ENCODE measurements at regions of chr11 and their contacts with region 1.

Region 1: GRCh38 chr11:72040726-72041441 is 39.5 kb downstream of the NUMA1 start:
- DNase-seq: peak; percentile 78 to 90
- H3K4me3 ChIP-seq: peak overlapping the region; percentile 51
- H3K27ac ChIP-seq: peak overlapping the region; percentile 32
- H3K4me1 ChIP-seq: peaks cover 12% of the 10 kb centered on the region
- H3K27me3 ChIP-seq: no peaks in the 10 kb centered on the region
- CTCF ChIP-seq: no peak

Region 2: DNA sequence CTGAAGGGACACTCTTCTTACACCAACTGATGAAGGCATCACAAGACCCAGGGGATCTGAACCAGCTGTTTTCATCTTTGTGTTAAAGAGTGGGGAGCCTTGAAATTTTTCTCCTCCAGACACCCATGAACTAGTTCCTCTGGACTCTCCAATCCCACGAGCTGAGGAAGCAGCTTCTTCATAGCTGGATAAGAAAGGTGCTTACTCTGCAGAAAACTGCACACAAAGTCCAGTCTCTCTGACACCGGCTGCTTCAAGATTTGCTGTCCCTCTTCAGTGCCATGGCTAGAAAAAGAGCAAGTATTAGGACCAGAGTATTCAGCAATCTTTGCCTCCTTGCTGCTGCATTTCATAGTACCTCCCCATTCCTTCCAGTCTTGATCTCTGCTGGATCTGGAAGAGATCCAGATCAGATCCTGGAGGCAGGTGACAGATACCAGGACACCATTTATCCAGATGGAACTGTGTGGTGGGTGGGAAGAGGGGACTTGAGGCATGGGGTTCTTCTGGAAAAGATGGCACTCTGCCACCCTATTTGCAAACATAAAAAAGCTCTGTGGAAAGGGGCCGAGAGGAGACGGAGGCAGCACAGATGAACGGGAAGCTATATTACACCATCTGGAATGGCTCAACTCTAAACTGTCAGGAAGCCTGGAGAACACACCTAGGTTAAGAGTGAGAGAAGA is 16.7 kb before region 1 on chr11:
- CTCF ChIA-PET with region 1: interaction called, 15 read pairs
- POLR2A ChIA-PET with region 1: interaction called, 9 read pairs
- intact Hi-C with region 1: no loop called
- DNase-seq: no peak
- H3K4me3 ChIP-seq: no peak overlapping the region
- H3K27ac ChIP-seq: no peak overlapping the region
- H3K4me1 ChIP-seq: no peaks in the 10 kb centered on the region
- H3K27me3 ChIP-seq: no peaks in the 10 kb centered on the region
- CTCF ChIP-seq: no peak

Region 3: DNA sequence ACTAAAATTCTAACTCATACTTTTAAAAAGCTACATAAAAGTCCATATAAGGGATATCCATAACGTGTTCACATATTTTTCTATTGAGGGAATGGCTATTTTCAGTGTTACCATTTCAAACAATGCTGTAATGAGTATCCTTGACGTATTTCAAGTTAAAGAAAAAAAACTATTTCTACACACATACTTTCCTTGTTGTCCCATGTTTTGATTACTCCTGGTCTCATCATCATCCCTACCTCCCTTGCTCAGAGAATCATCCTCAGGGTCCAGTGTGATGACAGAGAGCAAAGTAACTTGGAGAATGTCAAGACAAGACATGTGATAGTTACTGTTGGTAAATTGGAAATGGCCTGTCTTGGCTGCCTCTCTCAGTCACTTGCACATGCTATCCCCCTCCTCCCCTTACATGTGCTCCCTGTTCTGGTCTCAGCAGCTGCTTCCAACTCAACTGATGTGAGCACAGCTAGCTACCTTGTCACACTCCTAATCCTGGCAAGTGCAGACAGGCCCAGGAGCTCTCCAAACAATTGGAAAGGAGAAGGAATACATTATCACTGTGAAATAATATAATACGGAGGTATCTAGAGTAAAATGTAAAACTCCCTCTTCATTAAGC is 17.6 kb after region 1 on chr11:
- CTCF ChIA-PET with region 1: no interaction called
- POLR2A ChIA-PET with region 1: no interaction called
- intact Hi-C with region 1: no loop called
- DNase-seq: no peak
- H3K4me3 ChIP-seq: no peak overlapping the region
- H3K27ac ChIP-seq: no peak overlapping the region
- H3K4me1 ChIP-seq: no peaks in the 10 kb centered on the region
- H3K27me3 ChIP-seq: no peaks in the 10 kb centered on the region
- CTCF ChIP-seq: no peak

Region 4: GRCh38 chr11:72069787-72070251 is 28.9 kb after region 1 on chr11:
- CTCF ChIA-PET with region 1: no interaction called
- POLR2A ChIA-PET with region 1: interaction called, 6 read pairs
- intact Hi-C with region 1: loop called (anchors 1 kb)
- DNase-seq: peak; percentile 84 to 87
- H3K4me3 ChIP-seq: peak overlapping the region; percentile 35; the same call in 1 of the 2 replicates
- H3K27ac ChIP-seq: peak overlapping the region; percentile 83
- H3K4me1 ChIP-seq: peaks cover 57% of the 10 kb centered on the region
- H3K27me3 ChIP-seq: no peaks in the 10 kb centered on the region
- CTCF ChIP-seq: no peak

Region 5: DNA sequence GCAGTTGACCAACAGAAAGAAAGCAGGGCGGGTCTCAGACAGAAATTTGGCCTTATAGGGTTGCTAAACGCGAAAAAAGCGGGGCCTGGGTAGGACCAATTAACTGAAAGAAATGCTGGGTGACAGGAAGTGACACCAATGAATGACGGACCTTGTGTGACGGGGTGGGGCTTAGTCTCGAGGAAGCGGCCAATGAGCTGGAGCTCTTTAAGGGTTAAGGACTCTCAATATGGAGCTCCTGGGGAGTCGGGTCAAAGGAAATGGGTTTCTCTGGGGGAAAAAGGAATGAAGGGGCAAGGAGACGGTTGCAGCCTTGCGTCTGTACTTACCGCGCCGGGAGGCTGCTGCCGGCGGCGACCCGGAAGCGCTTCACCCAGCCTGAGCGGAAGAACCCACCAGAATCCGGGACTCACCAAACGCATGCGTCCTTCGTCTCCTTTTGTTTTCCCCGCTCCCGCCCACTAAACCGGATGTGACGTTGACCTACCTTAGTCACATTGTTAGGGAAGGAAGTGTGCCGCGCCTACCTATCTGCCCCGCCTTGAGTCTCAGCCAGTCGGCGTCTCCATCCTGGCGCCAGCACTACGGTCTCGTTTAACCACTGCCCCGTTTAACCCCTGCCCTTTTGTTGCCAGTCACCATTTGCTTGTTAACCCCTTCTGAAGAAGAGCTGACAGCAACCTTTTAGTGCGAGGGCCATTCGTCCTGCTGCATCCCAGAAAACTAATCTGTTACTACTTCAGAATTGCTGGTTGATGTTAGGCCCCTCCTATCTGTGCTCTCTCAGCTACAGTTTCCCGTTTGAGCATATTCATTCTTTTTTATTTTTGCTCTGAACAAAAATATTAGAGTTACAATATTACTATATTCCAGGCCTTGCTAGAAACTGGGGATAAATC is 71.7 kb after region 1 on chr11 and contains the start of gene ANAPC15:
- CTCF ChIA-PET with region 1: no interaction called
- POLR2A ChIA-PET with region 1: interaction called, 6 read pairs
- intact Hi-C with region 1: loop called (anchors 1 kb)
- DNase-seq: peak; percentile 97 to 99
- H3K4me3 ChIP-seq: peak within 1 kb of the TSS; percentile 56
- H3K27ac ChIP-seq: peak within 1 kb of the TSS; percentile 70
- H3K4me1 ChIP-seq: peaks cover 14% of the 10 kb centered on the region
- H3K27me3 ChIP-seq: no peaks in the 10 kb centered on the region
- CTCF ChIP-seq: no peak
- total RNA-seq, gene ANAPC15: 77.2 and 97.8 TPM in 2 replicates

Region 6: DNA sequence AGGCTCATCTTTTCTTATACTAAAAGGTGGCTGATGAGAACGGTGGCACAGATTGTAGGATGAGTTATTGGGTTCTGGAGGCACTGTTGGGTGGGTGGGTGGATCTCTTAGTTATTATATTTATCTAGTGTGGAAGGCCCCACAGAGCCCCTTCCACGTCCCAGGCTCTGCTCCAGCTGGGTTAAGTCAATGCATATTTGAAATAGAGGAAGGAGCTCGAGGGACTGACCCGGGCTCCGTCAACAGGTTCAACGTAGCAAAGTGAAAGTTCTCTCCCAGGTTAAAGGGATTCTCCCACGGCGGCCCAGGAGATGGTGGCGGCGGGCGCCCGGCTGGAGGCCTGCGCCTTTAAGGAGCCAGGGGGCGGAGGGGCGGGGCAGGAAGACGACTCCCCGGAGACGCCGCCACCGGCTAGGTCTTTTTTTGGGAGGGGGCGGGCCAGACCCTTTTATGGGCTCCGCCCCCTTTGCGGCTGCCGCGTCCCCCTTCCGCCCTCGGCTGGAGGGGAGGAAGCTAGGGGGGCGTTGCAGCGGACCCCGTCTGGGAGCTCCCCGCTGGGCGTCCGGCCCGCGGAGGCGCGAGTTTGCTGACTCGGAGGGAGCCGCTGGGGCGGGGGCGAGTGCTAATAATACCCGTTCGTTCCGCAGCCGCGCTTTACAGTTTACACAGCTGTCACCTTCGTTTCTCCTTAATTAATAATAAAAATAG is 182.2 kb after region 1 on chr11:
- CTCF ChIA-PET with region 1: no interaction called
- POLR2A ChIA-PET with region 1: no interaction called
- intact Hi-C with region 1: loop called (anchors 1 kb)
- DNase-seq: peak; percentile 84 to 97
- H3K4me3 ChIP-seq: peak overlapping the region; percentile 97
- H3K27ac ChIP-seq: peak overlapping the region; percentile 50
- H3K4me1 ChIP-seq: peaks cover 23% of the 10 kb centered on the region
- H3K27me3 ChIP-seq: no peaks in the 10 kb centered on the region
- CTCF ChIP-seq: peak; percentile 68; the same call in 1 of the 2 replicates

Region 7: GRCh38 chr11:73478738-73479347 is 1438.0 kb after region 1 on chr11:
- CTCF ChIA-PET with region 1: no interaction called
- POLR2A ChIA-PET with region 1: no interaction called
- intact Hi-C with region 1: no loop called
- DNase-seq: peak; percentile 26 to 54
- H3K4me3 ChIP-seq: no peak overlapping the region
- H3K27ac ChIP-seq: no peak overlapping the region
- H3K4me1 ChIP-seq: 0 out of 2 replicates have a peak, but pooled peaks cover 6% of the 10 kb centered on the region
- H3K27me3 ChIP-seq: no peaks in the 10 kb centered on the region
- CTCF ChIP-seq: peak; percentile 85

Measured in PC-9 (cell line).